ENCODE measurements at regions of chr19 and their contacts with region 1.

Region 1: GRCh38 chr19:37452500-37453245 is 14.6 kb downstream of the ZNF569 start:
- DNase-seq: no peak
- ATAC-seq: no peak

Region 2: DNA sequence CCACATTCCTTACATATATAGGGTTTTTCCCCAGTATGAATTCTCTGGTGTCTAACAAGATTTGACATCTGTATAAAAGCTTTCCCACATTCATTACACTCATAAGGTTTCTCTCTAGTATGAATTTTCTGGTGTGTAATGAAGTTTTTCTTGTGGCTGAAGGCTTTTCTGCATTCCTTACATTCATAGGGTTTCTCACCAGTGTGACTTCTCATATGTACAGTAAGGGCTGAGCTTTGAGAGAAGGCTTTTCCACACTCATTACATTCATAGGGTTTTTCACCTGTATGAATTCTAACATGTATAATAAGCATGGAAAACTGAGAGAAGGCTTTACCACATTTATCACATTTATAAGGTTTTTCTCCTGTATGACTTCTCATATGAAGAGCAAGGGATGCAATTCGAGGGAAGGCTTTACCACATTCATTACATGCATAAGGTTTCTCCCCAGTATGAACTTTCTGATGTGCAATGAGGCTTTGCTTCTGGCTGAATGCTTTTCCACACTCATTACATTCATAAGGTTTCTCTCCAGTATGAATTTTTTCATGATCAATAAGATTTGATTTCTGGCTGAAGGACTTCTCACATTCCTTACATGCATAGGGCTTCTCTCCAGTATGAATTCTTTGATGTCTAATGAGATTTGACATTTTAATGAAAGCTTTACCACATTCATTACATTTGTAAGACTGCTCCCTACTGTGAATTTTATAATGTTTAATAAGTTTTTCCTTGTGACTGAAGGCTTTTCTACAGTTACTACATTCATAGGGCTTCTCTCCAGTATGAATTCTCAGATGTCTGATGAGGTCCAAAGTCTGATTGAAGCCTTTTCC is 39.2 kb before region 1 on chr19:
- intact Hi-C with region 1: no loop called
- DNase-seq: no peak
- ATAC-seq: no peak

Region 3: GRCh38 chr19:38361633-38362075 is 909.0 kb after region 1 on chr19:
- intact Hi-C with region 1: loop called (anchors 10 kb)
- DNase-seq: peak; percentile 74
- ATAC-seq: peak; percentile 86

Measured in sciatic nerve (tissue), 2 donors.